ENCODE measurements at regions of chr4 and their contacts with region 1.

Region 1: GRCh38 chr4:124111922-124112321 is 600.6 kb downstream of the ANKRD50 start:
- DNase-seq: peak; percentile 84
- H3K4me3 ChIP-seq: no peak overlapping the region
- H3K27ac ChIP-seq: peak overlapping the region; percentile 5
- H3K4me1 ChIP-seq: peaks cover 9% of the 10 kb centered on the region
- H3K27me3 ChIP-seq: no peaks in the 10 kb centered on the region
- CTCF ChIP-seq: peak; percentile 42 to 49
- POLR2A ChIP-seq: no peak

Region 2: GRCh38 chr4:123127218-123127617 is 984.7 kb before region 1 on chr4:
- CTCF ChIA-PET with region 1: interaction called, 36 read pairs
- POLR2A ChIA-PET with region 1: no interaction called
- dilution Hi-C with region 1: no loop called
- intact Hi-C with region 1: loop called (anchors 1 kb)
- DNase-seq: peak; percentile 67
- H3K4me3 ChIP-seq: no peak overlapping the region
- H3K27ac ChIP-seq: peak overlapping the region; percentile 65
- H3K4me1 ChIP-seq: peaks cover 19% of the 10 kb centered on the region
- H3K27me3 ChIP-seq: no peaks in the 10 kb centered on the region
- CTCF ChIP-seq: no peak
- POLR2A ChIP-seq: no peak

Region 3: DNA sequence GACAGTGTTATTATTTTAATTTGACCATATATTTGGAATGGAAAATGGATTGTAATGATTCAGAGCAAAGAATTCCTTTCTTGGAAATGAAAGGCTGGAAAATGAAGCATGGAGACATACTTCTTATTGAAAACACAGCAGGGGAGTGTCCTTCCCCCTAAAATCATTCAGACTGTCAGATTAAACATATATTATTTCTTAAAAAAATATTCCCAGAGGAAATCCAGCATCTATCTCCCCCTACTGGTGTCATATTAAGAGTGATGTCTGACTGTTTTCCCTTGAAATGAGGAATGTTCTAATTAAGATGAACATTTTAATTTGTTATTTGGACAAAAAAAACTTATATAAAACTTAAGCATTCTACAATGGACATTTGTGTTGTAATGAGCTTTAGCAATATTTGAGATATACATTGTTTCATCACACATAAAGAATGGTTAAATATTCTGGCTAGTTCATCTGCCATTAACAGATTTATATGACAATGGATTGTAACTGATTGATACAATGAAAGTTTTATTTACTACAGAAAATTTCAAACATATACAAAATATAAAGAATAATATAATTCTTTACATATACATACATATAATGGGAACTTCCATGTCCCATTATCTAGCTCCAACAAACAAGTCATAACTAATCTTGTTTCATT is 450.7 kb before region 1 on chr4:
- CTCF ChIA-PET with region 1: interaction called, 14 read pairs
- POLR2A ChIA-PET with region 1: no interaction called
- dilution Hi-C with region 1: no loop called
- intact Hi-C with region 1: loop called (anchors 1 kb)
- DNase-seq: peak; percentile 49
- H3K4me3 ChIP-seq: no peak overlapping the region
- H3K27ac ChIP-seq: no peak overlapping the region
- H3K4me1 ChIP-seq: no peaks in the 10 kb centered on the region
- H3K27me3 ChIP-seq: no peaks in the 10 kb centered on the region
- CTCF ChIP-seq: peak; percentile 27 to 37
- POLR2A ChIP-seq: no peak

Region 4: DNA sequence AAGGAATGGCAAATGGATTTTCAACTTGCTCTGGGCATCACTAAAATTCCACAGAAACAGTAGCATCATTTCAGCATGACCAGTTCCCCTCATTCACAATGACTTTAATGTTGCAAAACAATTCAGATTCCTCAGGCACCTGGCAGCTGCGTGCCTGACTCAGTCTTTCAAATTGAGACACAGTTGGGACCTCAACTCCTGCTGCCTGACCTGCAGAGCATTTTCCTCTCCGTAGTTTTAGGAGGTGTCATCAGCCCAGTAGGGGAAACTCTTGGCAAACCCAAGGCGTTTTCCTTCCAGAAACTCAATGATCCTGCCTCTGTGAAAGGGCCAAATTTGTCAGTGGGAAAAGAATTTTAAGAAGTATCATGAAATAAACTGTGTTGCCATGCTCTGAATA is 326.4 kb before region 1 on chr4:
- CTCF ChIA-PET with region 1: no interaction called
- POLR2A ChIA-PET with region 1: no interaction called
- dilution Hi-C with region 1: no loop called
- intact Hi-C with region 1: no loop called
- DNase-seq: peak; percentile 10
- H3K4me3 ChIP-seq: no peak overlapping the region
- H3K27ac ChIP-seq: no peak overlapping the region
- H3K4me1 ChIP-seq: peaks cover 8% of the 10 kb centered on the region
- H3K27me3 ChIP-seq: no peaks in the 10 kb centered on the region
- CTCF ChIP-seq: no peak
- POLR2A ChIP-seq: no peak

Region 5: GRCh38 chr4:123893011-123893981 is 218.6 kb before region 1 on chr4:
- CTCF ChIA-PET with region 1: no interaction called
- POLR2A ChIA-PET with region 1: no interaction called
- dilution Hi-C with region 1: no loop called
- intact Hi-C with region 1: loop called (anchors 1 kb)
- DNase-seq: peak; percentile 87
- H3K4me3 ChIP-seq: peak overlapping the region in 1 of 3 experiments; percentile 26
- H3K27ac ChIP-seq: peak overlapping the region; percentile 96
- H3K4me1 ChIP-seq: peaks cover 69% of the 10 kb centered on the region
- H3K27me3 ChIP-seq: no peaks in the 10 kb centered on the region
- CTCF ChIP-seq: no peak
- POLR2A ChIP-seq: peak; percentile 43

Region 6: DNA sequence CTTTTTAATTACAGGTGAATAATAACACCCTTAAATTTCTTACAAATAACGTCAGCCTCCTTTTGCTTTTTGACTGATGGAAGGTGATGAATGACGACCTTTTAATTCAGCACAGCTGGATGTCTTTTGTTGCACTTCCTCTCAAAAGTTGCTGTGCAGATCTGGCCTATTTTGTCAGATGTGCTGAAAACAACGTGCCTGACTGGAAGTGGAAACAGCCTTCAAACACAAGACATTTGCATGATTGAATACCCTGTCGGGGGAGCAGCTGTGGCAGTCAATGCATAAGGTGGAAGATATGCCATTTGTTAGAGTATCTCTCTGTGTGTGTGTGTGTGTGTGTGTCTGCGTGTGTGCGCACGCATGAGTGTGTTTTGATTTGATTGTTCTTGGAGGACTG is 135.6 kb before region 1 on chr4:
- CTCF ChIA-PET with region 1: interaction called, 3 read pairs
- POLR2A ChIA-PET with region 1: no interaction called
- dilution Hi-C with region 1: no loop called
- intact Hi-C with region 1: loop called (anchors 1 kb)
- DNase-seq: peak; percentile 90
- H3K4me3 ChIP-seq: no peak overlapping the region
- H3K27ac ChIP-seq: peak overlapping the region; percentile 70
- H3K4me1 ChIP-seq: peaks cover 30% of the 10 kb centered on the region
- H3K27me3 ChIP-seq: no peaks in the 10 kb centered on the region
- CTCF ChIP-seq: no peak
- POLR2A ChIP-seq: no peak

Region 7: GRCh38 chr4:124030160-124030561 is 81.8 kb before region 1 on chr4:
- CTCF ChIA-PET with region 1: no interaction called
- POLR2A ChIA-PET with region 1: no interaction called
- dilution Hi-C with region 1: no loop called
- intact Hi-C with region 1: no loop called
- DNase-seq: no peak
- H3K4me3 ChIP-seq: no peak overlapping the region
- H3K27ac ChIP-seq: no peak overlapping the region
- H3K4me1 ChIP-seq: no peaks in the 10 kb centered on the region
- H3K27me3 ChIP-seq: no peaks in the 10 kb centered on the region
- CTCF ChIP-seq: no peak
- POLR2A ChIP-seq: no peak

Region 8: DNA sequence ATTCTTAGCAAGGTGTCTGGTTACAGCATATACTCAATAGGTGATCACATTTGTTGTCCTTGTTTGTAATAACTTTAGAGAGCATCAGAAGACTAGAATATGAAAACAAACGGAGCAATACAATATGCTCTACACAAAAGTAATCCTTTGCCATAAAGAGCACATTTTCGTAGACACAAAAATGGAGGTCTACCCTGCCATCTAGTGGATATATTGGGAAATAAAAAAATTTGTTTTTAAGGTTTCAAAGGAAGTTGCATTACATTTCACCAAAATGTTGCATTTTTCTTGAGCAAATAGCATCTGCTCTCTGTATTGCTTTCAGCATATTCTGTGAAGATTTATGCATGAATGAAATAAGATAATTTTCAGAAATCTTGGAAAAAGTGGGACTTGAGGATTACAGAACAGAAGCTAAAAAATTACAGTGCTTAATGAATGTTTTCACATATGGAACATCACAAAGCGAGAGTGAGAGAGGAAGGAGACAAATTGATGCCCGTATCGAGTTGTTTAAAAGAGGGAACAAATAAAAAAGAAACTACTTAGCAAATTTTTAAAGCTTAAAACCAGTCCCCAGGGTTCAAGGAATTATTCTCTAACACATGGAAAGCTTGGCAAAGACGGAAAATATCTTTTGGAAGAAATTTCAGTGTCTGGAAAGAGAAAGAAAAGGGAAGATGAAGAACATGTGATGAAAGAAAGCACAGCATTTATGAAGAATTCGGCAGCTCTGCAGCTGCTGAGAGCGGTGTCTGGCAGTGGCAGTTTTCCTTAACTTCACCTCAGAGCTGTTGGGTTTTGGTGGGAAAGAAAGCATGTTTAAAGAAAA is 210.5 kb after region 1 on chr4:
- CTCF ChIA-PET with region 1: interaction called, 4 read pairs
- POLR2A ChIA-PET with region 1: no interaction called
- dilution Hi-C with region 1: no loop called
- intact Hi-C with region 1: loop called (anchors 1 kb)
- DNase-seq: peak; percentile 56
- H3K4me3 ChIP-seq: no peak overlapping the region
- H3K27ac ChIP-seq: no peak overlapping the region
- H3K4me1 ChIP-seq: no peaks in the 10 kb centered on the region
- H3K27me3 ChIP-seq: no peaks in the 10 kb centered on the region
- CTCF ChIP-seq: peak; percentile 14 to 25
- POLR2A ChIP-seq: no peak

Region 9: DNA sequence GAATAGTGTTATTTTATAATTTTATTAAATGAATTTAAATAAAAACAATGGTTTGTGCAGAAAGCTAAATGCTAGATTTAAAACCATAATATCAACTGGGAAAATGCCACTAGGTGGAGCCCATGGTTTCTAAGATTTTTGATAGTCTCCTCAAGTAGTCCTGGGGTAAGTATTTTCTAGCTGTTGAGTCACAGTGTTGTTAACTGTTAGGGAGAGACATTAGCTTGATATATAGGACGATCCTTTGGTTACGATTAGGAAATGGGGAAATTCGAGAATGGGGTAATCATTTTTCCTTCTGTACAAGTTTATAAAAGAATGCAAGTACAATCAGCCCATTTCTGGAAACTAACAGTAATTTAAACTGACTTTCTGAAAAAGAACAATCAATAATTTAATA is 222.2 kb after region 1 on chr4:
- CTCF ChIA-PET with region 1: no interaction called
- POLR2A ChIA-PET with region 1: no interaction called
- dilution Hi-C with region 1: no loop called
- intact Hi-C with region 1: no loop called
- DNase-seq: peak; percentile 88
- H3K4me3 ChIP-seq: no peak overlapping the region
- H3K27ac ChIP-seq: peak overlapping the region; percentile 75
- H3K4me1 ChIP-seq: peaks cover 7% of the 10 kb centered on the region
- H3K27me3 ChIP-seq: no peaks in the 10 kb centered on the region
- CTCF ChIP-seq: peak; percentile 30 to 45
- POLR2A ChIP-seq: no peak

Measured in endothelial cell of umbilical vein (primary cell).